Spleen (tissue), 13 donors: ENCODE measurements at regions of chr2 and their contacts with region 1.

Region 1: GRCh38 chr2:20474757-20475566 is 28.1 kb downstream of the RHOB start:
- DNase-seq: peak; percentile 30
- H3K4me3 ChIP-seq: no peak overlapping the region
- H3K27ac ChIP-seq: no peak overlapping the region
- H3K4me1 ChIP-seq: no peaks in the 10 kb centered on the region
- H3K27me3 ChIP-seq: no peaks in the 10 kb centered on the region
- CTCF ChIP-seq: no peak
- POLR2A ChIP-seq: no peak

Region 2: DNA sequence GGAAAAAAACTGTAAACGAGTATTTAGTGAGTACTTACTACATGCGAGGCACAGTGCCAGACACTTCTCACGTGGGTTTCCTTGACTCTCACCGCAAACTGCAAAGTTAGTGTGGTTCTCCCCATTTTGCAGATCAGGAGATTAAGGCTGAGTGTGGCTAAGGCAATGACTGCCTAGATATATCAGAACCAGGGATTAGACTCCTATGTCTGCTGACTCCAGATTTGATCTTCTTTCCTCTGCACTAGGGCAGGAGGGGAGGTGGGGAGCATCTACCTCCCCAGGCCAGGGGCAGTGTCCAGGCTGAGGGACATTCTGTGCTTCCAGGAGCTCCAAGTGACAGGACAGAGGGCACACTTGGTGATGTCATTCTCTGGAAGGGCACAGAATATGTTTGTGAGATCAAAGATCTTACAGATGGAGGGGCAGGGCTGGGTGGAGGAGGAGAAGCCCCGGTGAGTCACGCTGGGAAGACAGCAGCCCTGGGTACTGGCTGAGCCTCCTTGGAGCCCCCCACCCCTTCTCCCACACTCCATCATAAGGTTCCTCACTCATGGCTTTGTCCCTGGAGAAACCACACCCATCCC is 64.3 kb after region 1 on chr2:
- intact Hi-C with region 1: loop called (anchors 10 kb)
- DNase-seq: no peak
- H3K4me3 ChIP-seq: no peak overlapping the region
- H3K27ac ChIP-seq: peak overlapping the region in 3 of 8 donors; percentile 43 to 60 (median 58)
- H3K4me1 ChIP-seq: peaks cover 0 to 8% (median 2%) of the 10 kb centered on the region in 6 donors
- H3K27me3 ChIP-seq: peaks cover 0 to 9% (median 0%) of the 10 kb centered on the region in 7 donors
- CTCF ChIP-seq: no peak
- POLR2A ChIP-seq: no peak

Region 3: GRCh38 chr2:21270708-21271122 is 795.8 kb after region 1 on chr2:
- intact Hi-C with region 1: no loop called
- DNase-seq: no peak
- H3K4me3 ChIP-seq: no peak overlapping the region
- H3K27ac ChIP-seq: peak overlapping the region in 3 of 8 donors; percentile 36 to 53 (median 44)
- H3K4me1 ChIP-seq: peaks cover 0 to 29% (median 8%) of the 10 kb centered on the region in 6 donors
- H3K27me3 ChIP-seq: no peaks in the 10 kb centered on the region
- CTCF ChIP-seq: no peak
- POLR2A ChIP-seq: no peak